Mammary epithelial cell (primary cell): ENCODE measurements at regions of chr14 and their contacts with region 1.

Region 1: GRCh38 chr14:24204163-24205146 is 1.0 kb upstream of the TSSK4 start:
- DNase-seq: no peak
- H3K4me3 ChIP-seq: no peak overlapping the region
- H3K27ac ChIP-seq: no peak overlapping the region
- H3K4me1 ChIP-seq: no peaks in the 10 kb centered on the region
- H3K27me3 ChIP-seq: no peaks in the 10 kb centered on the region
- CTCF ChIP-seq: no peak

Region 2: GRCh38 chr14:24279301-24280186 is 75.1 kb after region 1 on chr14:
- CTCF ChIA-PET with region 1: no interaction called
- dilution Hi-C with region 1: loop called (anchors 5 kb)
- in situ Hi-C with region 1: no loop called
- intact Hi-C with region 1: no loop called
- DNase-seq: peak; percentile 77
- H3K4me3 ChIP-seq: no peak overlapping the region
- H3K27ac ChIP-seq: peak overlapping the region; percentile 0
- H3K4me1 ChIP-seq: peaks cover 26% of the 10 kb centered on the region
- H3K27me3 ChIP-seq: no peaks in the 10 kb centered on the region
- CTCF ChIP-seq: peak; percentile 42 to 55

Region 3: DNA sequence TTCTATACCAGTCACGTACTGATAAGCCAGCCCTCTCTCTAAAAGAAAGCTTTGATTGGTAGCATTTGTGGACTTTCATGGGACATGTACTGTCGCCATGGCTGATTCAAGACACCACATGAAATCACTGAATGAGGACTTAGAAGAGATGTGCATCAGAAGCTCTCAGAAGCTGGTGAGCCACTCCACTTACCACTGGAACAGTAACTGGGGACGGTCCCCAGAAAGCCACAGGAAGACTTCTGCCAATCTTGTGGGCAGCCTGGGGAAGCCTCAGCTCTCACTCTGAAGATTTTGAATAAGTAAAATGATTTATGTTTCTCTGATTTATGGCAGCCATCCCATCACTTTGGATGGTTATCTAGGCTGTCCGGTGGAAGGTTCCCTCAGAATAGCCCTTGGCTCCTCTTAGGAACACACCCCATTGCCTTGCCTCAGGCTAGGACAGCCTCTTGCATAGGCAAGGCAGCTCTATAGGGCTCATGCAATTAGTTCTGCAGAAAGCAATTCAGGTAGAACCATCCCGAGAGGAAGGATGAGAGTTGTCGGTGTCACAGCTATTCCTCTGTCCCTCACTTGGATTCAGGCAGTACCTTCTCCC is 85.3 kb after region 1 on chr14:
- CTCF ChIA-PET with region 1: no interaction called
- dilution Hi-C with region 1: no loop called
- in situ Hi-C with region 1: no loop called
- intact Hi-C with region 1: no loop called
- DNase-seq: no peak
- H3K4me3 ChIP-seq: no peak overlapping the region
- H3K27ac ChIP-seq: no peak overlapping the region
- H3K4me1 ChIP-seq: peaks cover 14% of the 10 kb centered on the region
- H3K27me3 ChIP-seq: no peaks in the 10 kb centered on the region
- CTCF ChIP-seq: no peak